ENCODE measurements at regions of chr17 and their contacts with region 1.

Region 1: DNA sequence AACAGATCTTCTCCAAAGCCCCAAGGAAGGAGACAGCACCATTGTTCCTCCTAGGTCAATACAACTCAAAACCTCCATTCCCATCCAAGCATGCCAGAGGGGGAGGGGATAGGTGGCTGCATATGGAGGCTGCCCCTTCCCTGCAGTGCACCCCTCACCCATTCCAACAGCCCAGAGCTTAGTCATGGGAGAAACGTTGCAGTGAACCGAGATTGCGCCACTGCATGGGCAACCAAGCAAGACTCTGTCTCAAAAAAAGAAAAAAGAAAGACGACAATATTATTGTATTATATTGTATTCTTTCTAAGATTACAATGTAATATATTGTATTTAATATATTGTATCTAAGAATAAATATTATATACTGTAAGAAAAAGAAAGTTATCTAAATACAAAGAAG is 36.4 kb upstream of the CD300E start:
- DNase-seq: no peak
- H3K4me3 ChIP-seq: no peak overlapping the region
- H3K27ac ChIP-seq: no peak overlapping the region
- H3K4me1 ChIP-seq: 0 out of 7 replicates have a peak, but pooled peaks cover 0 to 2% (median 0%) of the 10 kb centered on the region in 4 experiments
- H3K27me3 ChIP-seq: no peaks in the 10 kb centered on the region
- CTCF ChIP-seq: no peak
- EP300 ChIP-seq: no peak
- POLR2A ChIP-seq: no peak
- RAD21 ChIP-seq: no peak

Region 2: GRCh38 chr17:74497471-74497870 is 162.4 kb before region 1 on chr17:
- CTCF ChIA-PET with region 1: no interaction called
- POLR2A ChIA-PET with region 1: no interaction called
- DNase-seq: no peak
- H3K4me3 ChIP-seq: no peak overlapping the region
- H3K27ac ChIP-seq: no peak overlapping the region
- H3K4me1 ChIP-seq: no peaks in the 10 kb centered on the region
- H3K27me3 ChIP-seq: no peaks in the 10 kb centered on the region
- CTCF ChIP-seq: no peak
- EP300 ChIP-seq: no peak
- POLR2A ChIP-seq: no peak
- RAD21 ChIP-seq: no peak

Region 3: DNA sequence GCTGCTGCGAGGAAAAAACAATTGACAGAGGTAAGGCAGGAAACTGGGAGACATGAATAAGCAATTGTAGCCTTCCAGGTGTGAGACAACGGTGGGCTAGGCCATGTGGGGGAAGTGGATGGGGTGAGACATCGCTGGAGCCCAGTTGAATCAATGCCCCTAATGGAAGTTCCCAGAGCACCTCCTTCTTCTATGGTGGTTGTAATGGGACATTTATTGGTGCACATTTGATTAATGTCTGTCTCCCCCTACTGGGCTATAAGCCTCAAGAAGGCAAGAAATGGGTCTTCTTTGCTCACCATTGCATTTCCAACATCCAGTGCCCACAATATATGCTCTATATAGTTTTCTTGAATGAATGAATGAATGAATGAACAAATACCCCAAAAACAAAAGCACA is 13.7 kb before region 1 on chr17:
- CTCF ChIA-PET with region 1: interaction called, 20 read pairs
- POLR2A ChIA-PET with region 1: no interaction called
- DNase-seq: no peak
- H3K4me3 ChIP-seq: no peak overlapping the region
- H3K27ac ChIP-seq: no peak overlapping the region
- H3K4me1 ChIP-seq: peaks cover 0 to 2% (median 2%) of the 10 kb centered on the region in 4 experiments; a peak in 2 of 7 replicates
- H3K27me3 ChIP-seq: peaks cover 0 to 2% (median 0%) of the 10 kb centered on the region in 4 experiments; a peak in 2 of 7 replicates
- CTCF ChIP-seq: peak in 2 of 3 experiments; percentile 49 to 54; a peak in 3 of 4 replicates
- EP300 ChIP-seq: no peak
- POLR2A ChIP-seq: no peak
- RAD21 ChIP-seq: peak; percentile 51 to 59

Region 4: GRCh38 chr17:74686761-74687160 is 26.9 kb after region 1 on chr17:
- CTCF ChIA-PET with region 1: interaction called, 12 read pairs
- POLR2A ChIA-PET with region 1: no interaction called
- DNase-seq: no peak
- H3K4me3 ChIP-seq: no peak overlapping the region
- H3K27ac ChIP-seq: no peak overlapping the region
- H3K4me1 ChIP-seq: no peaks in the 10 kb centered on the region
- H3K27me3 ChIP-seq: peaks cover 0 to under 1% (median 0%) of the 10 kb centered on the region in 4 experiments; a peak in 1 of 7 replicates
- CTCF ChIP-seq: no peak
- EP300 ChIP-seq: no peak
- POLR2A ChIP-seq: no peak
- RAD21 ChIP-seq: no peak

Region 5: GRCh38 chr17:74770498-74771318 is 110.8 kb after region 1 on chr17:
- CTCF ChIA-PET with region 1: interaction called, 22 read pairs
- POLR2A ChIA-PET with region 1: no interaction called
- DNase-seq: peak in 1 of 2 experiments; percentile 82
- H3K4me3 ChIP-seq: no peak overlapping the region
- H3K27ac ChIP-seq: no peak overlapping the region; the same call in 1 of the 2 replicates
- H3K4me1 ChIP-seq: peaks cover 0 to 2% (median under 1%) of the 10 kb centered on the region in 4 experiments; a peak in 3 of 7 replicates
- H3K27me3 ChIP-seq: no peaks in the 10 kb centered on the region
- CTCF ChIP-seq: peak; percentile 93 to 99 (median 96)
- EP300 ChIP-seq: no peak
- POLR2A ChIP-seq: no peak; a peak in 1 of 3 replicates
- RAD21 ChIP-seq: peak; percentile 96

Region 6: GRCh38 chr17:74864866-74865395 is 205.0 kb after region 1 on chr17:
- CTCF ChIA-PET with region 1: interaction called, 10 read pairs
- POLR2A ChIA-PET with region 1: no interaction called
- DNase-seq: peak in 1 of 2 experiments; percentile 95
- H3K4me3 ChIP-seq: no peak overlapping the region
- H3K27ac ChIP-seq: no peak overlapping the region
- H3K4me1 ChIP-seq: peaks cover 0 to 7% (median 5%) of the 10 kb centered on the region in 4 experiments; a peak in 4 of 7 replicates
- H3K27me3 ChIP-seq: peaks cover 21 to 23% (median 21%) of the 10 kb centered on the region in 4 experiments
- CTCF ChIP-seq: peak; percentile 92 to 97 (median 96)
- EP300 ChIP-seq: no peak
- POLR2A ChIP-seq: no peak
- RAD21 ChIP-seq: peak; percentile 81 to 86